ENCODE measurements at regions of chr4 and their contacts with region 1.

Region 1: DNA sequence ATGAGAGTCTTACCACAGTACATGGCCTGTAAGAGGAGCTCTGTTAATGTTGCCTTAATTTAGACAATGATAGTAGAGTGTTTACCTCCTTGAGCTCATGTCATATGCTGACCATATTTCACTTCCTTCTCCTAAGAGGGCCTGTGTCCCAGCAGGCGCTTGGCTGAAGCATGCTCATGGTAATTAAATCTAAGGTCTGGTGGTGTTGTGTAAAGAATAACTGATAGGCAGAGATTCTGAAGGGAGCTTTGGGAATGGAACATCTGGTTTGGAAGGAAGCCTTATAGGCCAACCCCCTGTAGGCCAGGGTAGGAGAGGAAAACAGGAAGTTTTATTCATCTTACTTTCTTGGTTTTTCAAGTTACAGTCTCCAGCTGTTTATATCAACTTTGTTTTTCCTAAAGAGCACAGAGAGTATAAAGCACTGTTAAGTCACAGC is 300.2 kb downstream of the USP46 start:
- DNase-seq: peak in 2 of 5 donors; percentile 11 to 38
- ATAC-seq: peak; percentile 57 to 85 (median 76)
- H3K4me3 ChIP-seq: no peak overlapping the region
- H3K27ac ChIP-seq: peak overlapping the region in 3 of 12 donors; percentile 14 to 35 (median 32)
- H3K4me1 ChIP-seq: peaks cover 0 to 7% (median 0%) of the 10 kb centered on the region in 12 donors
- H3K27me3 ChIP-seq: no peaks in the 10 kb centered on the region
- CTCF ChIP-seq: no peak
- POLR2A ChIP-seq: no peak

Region 2: GRCh38 chr4:52199574-52200338 is 159.1 kb before region 1 on chr4:
- intact Hi-C with region 1: no loop called
- DNase-seq: no peak
- ATAC-seq: no peak
- H3K4me3 ChIP-seq: no peak overlapping the region
- H3K27ac ChIP-seq: no peak overlapping the region
- H3K4me1 ChIP-seq: peaks cover 0 to 3% (median 0%) of the 10 kb centered on the region in 12 donors
- H3K27me3 ChIP-seq: peaks cover 0 to 8% (median 0%) of the 10 kb centered on the region in 9 donors
- CTCF ChIP-seq: no peak
- POLR2A ChIP-seq: no peak

Region 3: GRCh38 chr4:52244848-52245247 is 114.1 kb before region 1 on chr4:
- intact Hi-C with region 1: loop called in 2 of 10 experiments (anchors 10 kb)
- DNase-seq: no peak
- ATAC-seq: peak in 3 of 4 donors; percentile 66 to 75 (median 73)
- H3K4me3 ChIP-seq: no peak overlapping the region
- H3K27ac ChIP-seq: no peak overlapping the region
- H3K4me1 ChIP-seq: peaks cover 0 to 45% (median 14%) of the 10 kb centered on the region in 12 donors
- H3K27me3 ChIP-seq: no peaks in the 10 kb centered on the region
- CTCF ChIP-seq: no peak
- POLR2A ChIP-seq: no peak

Region 4: GRCh38 chr4:52290466-52290865 is 68.4 kb before region 1 on chr4:
- intact Hi-C with region 1: no loop called
- DNase-seq: peak in 2 of 5 donors; percentile 24 to 33
- ATAC-seq: peak in 1 of 4 donors; percentile 31
- H3K4me3 ChIP-seq: no peak overlapping the region
- H3K27ac ChIP-seq: no peak overlapping the region
- H3K4me1 ChIP-seq: no peaks in the 10 kb centered on the region
- H3K27me3 ChIP-seq: no peaks in the 10 kb centered on the region
- CTCF ChIP-seq: no peak
- POLR2A ChIP-seq: no peak